ENCODE measurements at regions of chr13 and their contacts with region 1.

Region 1: DNA sequence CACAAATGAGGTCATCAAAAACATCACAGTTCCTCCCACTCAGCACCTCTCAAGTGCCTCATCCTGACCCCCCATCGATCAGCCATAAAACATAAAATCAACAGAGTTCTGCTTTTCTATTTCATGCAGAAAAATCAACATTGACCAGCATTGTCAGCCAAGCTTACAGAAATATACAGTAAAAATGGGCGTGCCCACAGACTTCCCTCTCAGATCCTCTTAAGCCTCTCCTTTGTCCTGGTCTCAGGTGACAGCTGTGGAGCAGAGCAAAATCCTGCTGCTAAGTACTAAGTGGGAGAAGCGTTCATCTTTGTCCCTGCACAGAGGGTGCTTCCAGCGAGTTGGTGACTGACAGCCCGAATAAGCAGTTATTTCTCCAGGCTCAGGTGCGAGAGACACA is 213.3 kb downstream of the OLFM4 start:
- DNase-seq: peak; percentile 62 to 63
- H3K4me3 ChIP-seq: no peak overlapping the region
- H3K4me1 ChIP-seq: peaks cover 19% of the 10 kb centered on the region
- H3K27me3 ChIP-seq: no peaks in the 10 kb centered on the region

Region 2: DNA sequence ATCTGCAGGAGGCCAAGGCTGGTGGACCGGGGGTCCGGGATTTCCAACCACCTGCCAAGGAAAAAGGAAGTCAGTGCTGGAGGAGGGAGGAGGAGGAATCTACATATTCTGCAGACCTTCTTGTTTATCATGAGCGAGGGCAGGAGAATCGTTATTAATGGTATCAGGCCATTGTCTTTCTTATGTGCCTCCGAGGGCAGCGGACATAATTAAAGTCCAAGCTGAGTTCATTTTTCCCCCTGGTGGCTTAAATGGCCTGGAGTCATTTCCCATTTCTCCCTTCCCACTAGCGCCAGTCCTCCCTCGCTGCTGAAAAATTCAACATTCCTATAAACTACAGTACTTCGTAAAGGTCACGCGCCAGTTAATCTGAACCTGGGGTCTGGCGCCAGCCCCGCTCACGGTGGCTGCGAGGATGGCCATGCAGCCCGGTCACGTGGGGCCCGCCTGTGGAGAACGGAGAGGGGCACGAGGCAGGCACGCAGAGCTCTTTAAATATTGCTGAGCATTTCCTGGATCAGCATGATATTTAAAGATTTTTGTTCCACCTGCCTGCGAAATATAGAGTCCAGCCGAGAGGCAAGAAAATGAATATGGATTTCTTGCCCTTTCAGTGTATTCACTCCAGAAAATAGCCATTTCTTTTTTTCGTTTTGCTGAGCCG is 308.3 kb before region 1 on chr13:
- in situ Hi-C with region 1: no loop called
- DNase-seq: no peak
- H3K4me3 ChIP-seq: no peak overlapping the region
- H3K4me1 ChIP-seq: no peaks in the 10 kb centered on the region
- H3K27me3 ChIP-seq: no peaks in the 10 kb centered on the region

Region 3: DNA sequence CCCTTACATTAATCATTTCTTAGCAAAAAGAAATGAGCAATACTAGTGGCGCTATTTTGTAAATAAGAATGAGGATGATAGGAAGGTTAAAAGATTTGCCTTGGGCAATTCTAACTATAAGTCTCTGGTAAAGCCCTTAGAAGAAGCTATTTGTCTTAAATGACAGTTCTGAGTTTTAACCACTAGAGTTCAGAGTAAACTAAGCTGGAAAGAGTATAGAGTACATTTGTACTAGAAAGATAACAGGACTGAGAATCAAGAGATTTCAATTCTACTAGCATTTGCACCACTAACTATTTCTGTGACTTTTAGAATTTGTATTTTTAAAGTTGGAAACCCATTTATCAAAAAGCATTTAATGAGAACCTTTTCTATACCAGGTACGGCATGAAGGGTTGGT is 537.0 kb after region 1 on chr13:
- in situ Hi-C with region 1: loop called (anchors 10 kb)
- DNase-seq: peak in 1 of 2 experiments; percentile 79
- H3K4me3 ChIP-seq: no peak overlapping the region
- H3K4me1 ChIP-seq: peaks cover 34% of the 10 kb centered on the region
- H3K27me3 ChIP-seq: no peaks in the 10 kb centered on the region

Region 4: GRCh38 chr13:54185785-54186184 is 943.8 kb after region 1 on chr13:
- in situ Hi-C with region 1: loop called (anchors 10 kb)
- DNase-seq: peak; percentile 72 to 86
- H3K4me3 ChIP-seq: no peak overlapping the region
- H3K4me1 ChIP-seq: peaks cover 39% of the 10 kb centered on the region
- H3K27me3 ChIP-seq: no peaks in the 10 kb centered on the region

Measured in HAP-1 (cell line).